Posterior vena cava (tissue), 2 donors: ENCODE measurements at regions of chr9 and their contacts with region 1.

Region 1: DNA sequence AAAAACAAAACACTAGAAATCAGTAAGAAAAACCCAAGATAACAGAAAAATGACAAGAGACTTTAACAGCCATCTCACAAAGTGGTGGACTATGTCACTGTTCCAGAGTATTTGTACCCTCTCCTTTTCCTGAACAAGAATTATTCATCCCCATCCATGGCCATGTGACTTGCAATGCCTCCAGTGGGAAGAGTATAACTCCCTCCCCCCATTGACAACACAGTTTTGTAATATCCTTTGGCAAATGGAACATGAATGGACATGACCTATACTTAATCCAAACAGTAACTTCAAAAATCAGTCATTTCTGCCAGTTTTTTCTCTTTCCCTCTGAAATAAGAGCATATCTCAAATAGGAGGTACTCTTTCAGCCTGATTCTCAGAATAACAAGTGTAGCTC is 33.9 kb downstream of the PTBP3 start:
- DNase-seq: no peak

Region 2: DNA sequence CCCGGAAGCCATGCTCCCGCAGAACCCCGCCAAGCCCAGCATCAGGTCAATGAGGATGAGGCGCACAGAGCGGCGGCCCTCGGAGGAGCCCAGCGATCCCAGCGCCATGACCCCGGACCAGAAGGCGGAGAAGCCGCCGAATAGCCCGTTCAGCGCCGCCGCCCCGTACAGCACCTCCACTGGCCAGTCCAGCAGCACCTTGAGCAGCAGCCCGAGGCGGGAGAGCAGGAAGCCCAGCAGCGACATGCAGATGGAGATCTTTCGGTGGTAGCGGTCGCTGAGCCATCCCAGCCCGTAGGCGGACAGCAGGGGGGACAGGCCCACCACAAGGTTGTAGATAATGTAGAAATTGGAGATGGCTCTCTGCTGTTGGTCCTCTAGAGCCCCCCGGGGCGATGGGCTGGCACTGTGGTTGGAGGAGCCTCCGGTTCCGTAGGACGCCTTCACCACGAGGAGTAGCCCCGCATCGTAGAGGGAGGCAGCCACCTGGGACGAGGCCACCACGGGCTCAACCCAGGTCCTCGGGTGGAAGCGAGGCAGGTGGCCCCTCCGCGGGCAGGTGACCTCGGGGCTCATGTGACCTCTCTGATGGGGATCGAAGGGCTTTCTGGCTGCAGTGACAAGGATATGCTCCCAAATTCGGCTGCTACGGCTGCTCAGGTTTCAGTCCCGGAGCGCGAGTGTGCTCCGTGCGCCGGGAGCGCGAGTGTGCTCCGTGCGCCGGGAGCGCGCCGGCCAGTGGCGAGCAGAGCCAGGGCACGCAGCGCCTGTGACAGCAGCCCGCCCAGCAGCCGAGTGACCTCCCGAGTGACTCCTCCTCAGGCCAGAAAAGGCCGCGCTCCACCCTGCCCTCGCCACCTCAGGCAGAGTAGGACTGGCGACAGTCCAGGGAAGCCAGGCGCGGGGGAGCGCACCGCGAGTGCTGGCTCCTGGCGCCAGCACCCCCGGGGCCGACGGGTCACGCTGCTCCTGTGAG is 590.9 kb after region 1 on chr9 and contains the start of gene SLC46A2:
- intact Hi-C with region 1: loop called in 1 of 2 experiments (anchors 5 kb)
- DNase-seq: no peak
- total RNA-seq, gene SLC46A2: 0.19 to 0.28 TPM